Panc1 (cell line): ENCODE measurements at regions of chr10 and their contacts with region 1.

Region 1: DNA sequence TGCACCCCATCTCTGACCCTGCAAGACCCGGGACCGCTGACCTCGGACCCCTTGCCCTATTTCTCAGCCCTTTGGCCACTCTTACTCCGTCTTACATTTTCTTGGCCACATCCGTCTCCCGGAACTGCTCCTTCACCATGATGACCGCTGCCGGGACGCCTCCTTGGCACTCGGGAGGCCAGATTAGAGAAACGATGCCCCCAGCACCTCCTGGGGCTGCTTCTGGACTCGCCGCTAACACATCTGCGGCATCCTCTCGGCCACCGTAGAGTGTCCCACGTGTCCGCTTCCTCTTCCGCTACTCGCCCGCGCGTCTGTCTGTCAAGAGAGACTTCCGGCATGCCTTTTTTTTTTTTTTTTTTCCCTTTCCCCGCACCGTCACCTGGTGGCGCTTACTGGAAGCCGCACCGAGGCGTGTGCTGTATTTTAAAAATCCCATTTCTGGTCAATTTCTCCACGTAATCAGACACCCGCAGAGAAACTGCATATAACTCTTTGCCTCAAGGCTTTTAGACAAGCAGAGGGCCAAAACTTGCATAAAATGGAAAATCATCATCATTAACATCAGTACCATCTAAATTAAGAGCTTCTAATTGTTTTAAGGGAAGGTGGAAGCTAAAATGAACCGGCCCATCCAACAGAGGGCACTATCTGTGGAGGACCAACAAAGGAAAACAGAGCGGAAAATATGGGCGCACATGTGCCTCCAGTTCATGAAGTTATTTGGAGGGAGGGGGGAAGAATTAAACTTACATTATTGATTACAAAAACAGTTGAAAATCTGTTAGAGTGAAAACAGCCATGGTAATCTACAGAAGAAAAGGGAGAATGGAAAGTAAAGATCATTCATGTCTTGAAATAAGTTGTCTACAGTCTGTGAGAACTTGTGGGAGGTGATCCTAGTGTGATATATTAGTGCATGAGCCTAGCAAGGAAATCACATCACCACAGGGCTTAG is at the start of gene POLR3A:
- DNase-seq: peak; percentile 93
- ATAC-seq: peak; percentile 77
- H3K4me3 ChIP-seq: peak within 1 kb of the TSS; percentile 94 to 98
- H3K27ac ChIP-seq: peak within 1 kb of the TSS; percentile 96
- H3K4me1 ChIP-seq: peaks cover 11% of the 10 kb centered on the region
- H3K27me3 ChIP-seq: no peaks in the 10 kb centered on the region
- CTCF ChIP-seq: peak; percentile 99
- total RNA-seq, gene POLR3A: 26.3 TPM

Region 2: DNA sequence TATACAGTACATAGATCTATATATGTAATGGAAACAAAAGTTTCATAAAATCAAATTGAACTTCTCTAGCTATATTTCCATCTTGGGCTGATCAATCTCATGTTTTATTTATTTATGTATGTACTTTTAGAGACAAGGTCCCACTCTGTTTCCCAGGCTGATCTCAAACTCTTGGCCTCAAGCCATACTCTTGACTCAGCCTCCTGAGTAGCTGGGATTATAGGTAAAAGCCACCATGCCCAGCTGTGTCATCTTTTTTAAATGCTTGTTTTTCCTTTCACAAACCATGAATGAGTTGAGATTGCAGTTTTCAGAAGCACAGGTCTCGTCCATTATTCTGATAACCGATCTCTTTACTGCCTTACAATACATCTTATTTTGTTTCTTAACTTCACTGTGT is 792.8 kb before region 1 on chr10:
- CTCF ChIA-PET with region 1: no interaction called
- POLR2A ChIA-PET with region 1: no interaction called
- in situ Hi-C with region 1: no loop called
- intact Hi-C with region 1: no loop called
- DNase-seq: no peak
- ATAC-seq: 0 out of 2 replicates have a peak, but pooled peaks have one; percentile 49
- H3K4me3 ChIP-seq: no peak overlapping the region
- H3K27ac ChIP-seq: no peak overlapping the region
- H3K4me1 ChIP-seq: peaks cover 20% of the 10 kb centered on the region; the same call in 1 of the 2 replicates
- H3K27me3 ChIP-seq: no peaks in the 10 kb centered on the region
- CTCF ChIP-seq: no peak

Region 3: DNA sequence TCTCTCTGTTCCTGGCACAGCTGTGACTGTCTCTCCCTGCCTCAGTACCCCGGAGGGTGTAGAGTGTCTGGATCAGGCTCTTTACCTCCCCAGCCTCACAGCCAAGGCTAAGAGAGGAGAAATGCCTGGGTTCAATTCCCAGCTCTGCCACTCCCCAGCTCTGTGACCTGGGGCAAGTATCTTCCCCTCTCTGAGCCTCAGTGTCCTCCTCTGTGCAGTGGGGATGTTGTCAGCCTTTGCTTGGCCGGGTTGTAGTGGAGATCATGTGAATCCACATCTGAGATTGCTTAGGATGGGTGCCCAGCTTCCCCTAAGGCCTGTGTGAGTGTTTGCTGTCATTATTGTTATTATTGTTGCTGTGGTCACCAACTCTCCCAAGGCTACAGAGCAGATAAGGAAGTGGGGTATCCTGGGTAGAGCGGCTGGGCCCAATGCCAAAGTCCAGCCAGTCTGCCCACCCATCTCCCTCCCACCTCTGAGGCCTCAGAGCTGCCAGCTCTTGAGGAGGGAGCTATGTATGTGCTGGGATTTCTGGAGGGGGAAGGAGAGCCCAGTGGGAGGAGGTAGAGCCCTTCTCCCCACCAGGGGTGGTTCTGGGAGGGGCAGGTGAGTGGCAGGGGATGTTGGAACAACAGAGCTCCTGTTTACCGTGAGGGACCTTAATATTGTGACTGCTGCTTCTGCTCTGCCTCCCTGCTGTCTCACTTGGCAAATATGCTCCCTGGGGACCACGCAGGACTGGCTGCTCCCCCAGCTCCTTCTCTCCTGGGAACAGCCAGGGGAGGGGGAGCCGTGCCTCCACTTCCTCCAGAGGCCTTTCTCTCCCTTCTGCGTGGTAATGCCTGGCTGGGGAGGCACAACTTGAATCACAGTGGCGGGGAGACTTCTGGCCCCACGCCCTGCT is 174.6 kb after region 1 on chr10:
- CTCF ChIA-PET with region 1: interaction called, 11 read pairs
- POLR2A ChIA-PET with region 1: no interaction called
- in situ Hi-C with region 1: no loop called
- intact Hi-C with region 1: no loop called
- DNase-seq: no peak
- ATAC-seq: no peak; the same call in 1 of the 2 replicates
- H3K4me3 ChIP-seq: no peak overlapping the region
- H3K27ac ChIP-seq: no peak overlapping the region
- H3K4me1 ChIP-seq: no peaks in the 10 kb centered on the region
- H3K27me3 ChIP-seq: peaks cover 4% of the 10 kb centered on the region; the same call in 1 of the 2 replicates
- CTCF ChIP-seq: no peak